CD8-positive, alpha-beta T cell (primary cell): ENCODE measurements at regions of chr13 and their contacts with region 1.

Region 1: GRCh38 chr13:114132419-114133121 is at the start of gene RASA3:
- DNase-seq: peak in 7 of 9 experiments; percentile 55 to 84 (median 73)
- ATAC-seq: peak; percentile 35
- H3K4me3 ChIP-seq: peak within 1 kb of the TSS; percentile 96 to 99
- H3K4me3 Mint-ChIP-seq: peak within 1 kb of the TSS; percentile 100
- H3K27ac ChIP-seq: peak within 1 kb of the TSS; percentile 90 to 92
- H3K27ac Mint-ChIP-seq: peak within 1 kb of the TSS; percentile 100
- H3K4me1 ChIP-seq: peaks cover 43% of the 10 kb centered on the region
- H3K4me1 Mint-ChIP-seq: peaks cover 55% of the 10 kb centered on the region
- H3K27me3 ChIP-seq: no peaks in the 10 kb centered on the region
- H3K27me3 Mint-ChIP-seq: no peaks in the 10 kb centered on the region
- CTCF ChIP-seq: no peak
- total RNA-seq, gene RASA3: 144 TPM

Region 2: DNA sequence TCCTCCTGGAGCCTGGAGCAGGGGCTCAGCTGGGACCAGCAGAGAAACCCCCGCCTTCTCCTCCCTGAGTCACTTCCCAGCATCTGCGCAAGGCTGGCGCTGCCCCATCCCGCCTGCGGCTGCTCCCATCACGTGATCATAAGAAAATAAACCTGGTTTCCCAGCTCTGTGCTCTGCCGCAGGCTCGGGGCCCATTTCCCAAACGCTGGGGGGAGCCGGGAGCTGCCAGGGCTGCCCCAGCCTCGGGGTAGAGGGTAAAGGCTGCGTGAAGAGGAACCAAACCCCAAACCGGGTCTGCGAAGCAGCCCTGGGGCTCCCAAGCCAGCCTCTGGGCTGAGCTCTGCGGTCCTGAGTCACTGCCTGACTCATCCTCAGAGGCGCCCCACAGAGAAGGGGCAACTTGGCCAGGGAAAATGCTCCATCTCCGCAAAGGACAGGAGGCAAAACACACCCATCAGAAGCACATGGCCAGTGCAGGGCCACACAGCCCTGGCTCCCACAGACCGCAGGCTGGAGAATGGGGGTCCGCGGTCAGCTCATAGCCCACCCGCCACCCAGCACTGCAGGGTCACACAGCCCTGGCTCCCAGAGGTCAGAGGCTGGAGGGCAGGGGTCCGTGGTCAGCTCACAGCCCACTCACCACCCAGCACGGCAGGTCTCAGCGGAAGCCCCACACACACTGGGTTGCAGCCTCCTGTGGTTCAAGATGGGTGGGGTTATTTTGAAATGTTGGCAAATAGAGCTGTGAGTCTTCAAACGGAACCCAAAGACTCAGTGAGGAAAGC is 67.2 kb before region 1 on chr13:
- CTCF ChIA-PET with region 1: no interaction called
- POLR2A ChIA-PET with region 1: interaction called, 10 read pairs
- intact Hi-C with region 1: loop called in 1 of 2 experiments (anchors 5 kb)
- DNase-seq: peak; percentile 29 to 84 (median 76)
- ATAC-seq: peak; percentile 68
- H3K4me3 ChIP-seq: peak overlapping the region; percentile 37 to 72
- H3K4me3 Mint-ChIP-seq: peak overlapping the region; percentile 84
- H3K27ac ChIP-seq: peak overlapping the region; percentile 29 to 78
- H3K27ac Mint-ChIP-seq: peak overlapping the region; percentile 96
- H3K4me1 ChIP-seq: peaks cover 63% of the 10 kb centered on the region
- H3K4me1 Mint-ChIP-seq: peaks cover 67% of the 10 kb centered on the region
- H3K27me3 ChIP-seq: no peaks in the 10 kb centered on the region
- H3K27me3 Mint-ChIP-seq: no peaks in the 10 kb centered on the region
- CTCF ChIP-seq: no peak

Region 3: GRCh38 chr13:114143806-114144605 is 11.4 kb after region 1 on chr13:
- CTCF ChIA-PET with region 1: interaction called, 21 read pairs
- POLR2A ChIA-PET with region 1: interaction called, 26 read pairs
- intact Hi-C with region 1: loop called (anchors 1 kb)
- DNase-seq: peak in 7 of 9 experiments; percentile 46 to 81 (median 73)
- ATAC-seq: peak; percentile 15
- H3K4me3 ChIP-seq: peak overlapping the region in 1 of 2 experiments; percentile 23
- H3K4me3 Mint-ChIP-seq: no peak overlapping the region
- H3K27ac ChIP-seq: peak overlapping the region; percentile 80 to 86
- H3K27ac Mint-ChIP-seq: no peak overlapping the region
- H3K4me1 ChIP-seq: peaks cover 85% of the 10 kb centered on the region
- H3K4me1 Mint-ChIP-seq: peaks cover 12% of the 10 kb centered on the region
- H3K27me3 ChIP-seq: no peaks in the 10 kb centered on the region
- H3K27me3 Mint-ChIP-seq: no peaks in the 10 kb centered on the region
- CTCF ChIP-seq: peak; percentile 30

Region 4: GRCh38 chr13:114219392-114219791 is 86.8 kb after region 1 on chr13:
- CTCF ChIA-PET with region 1: interaction called, 4 read pairs
- POLR2A ChIA-PET with region 1: interaction called, 10 read pairs
- intact Hi-C with region 1: no loop called
- DNase-seq: peak in 1 of 9 experiments; percentile 47
- ATAC-seq: peak; percentile 48
- H3K4me3 ChIP-seq: peak overlapping the region in 1 of 2 experiments; percentile 20
- H3K4me3 Mint-ChIP-seq: peak overlapping the region; percentile 52
- H3K27ac ChIP-seq: peak overlapping the region in 1 of 2 experiments; percentile 7
- H3K27ac Mint-ChIP-seq: peak overlapping the region; percentile 80
- H3K4me1 ChIP-seq: peaks cover 43% of the 10 kb centered on the region
- H3K4me1 Mint-ChIP-seq: peaks cover 66% of the 10 kb centered on the region
- H3K27me3 ChIP-seq: no peaks in the 10 kb centered on the region
- H3K27me3 Mint-ChIP-seq: no peaks in the 10 kb centered on the region
- CTCF ChIP-seq: no peak